ENCODE measurements at regions of chr1 and their contacts with region 1.

Region 1: DNA sequence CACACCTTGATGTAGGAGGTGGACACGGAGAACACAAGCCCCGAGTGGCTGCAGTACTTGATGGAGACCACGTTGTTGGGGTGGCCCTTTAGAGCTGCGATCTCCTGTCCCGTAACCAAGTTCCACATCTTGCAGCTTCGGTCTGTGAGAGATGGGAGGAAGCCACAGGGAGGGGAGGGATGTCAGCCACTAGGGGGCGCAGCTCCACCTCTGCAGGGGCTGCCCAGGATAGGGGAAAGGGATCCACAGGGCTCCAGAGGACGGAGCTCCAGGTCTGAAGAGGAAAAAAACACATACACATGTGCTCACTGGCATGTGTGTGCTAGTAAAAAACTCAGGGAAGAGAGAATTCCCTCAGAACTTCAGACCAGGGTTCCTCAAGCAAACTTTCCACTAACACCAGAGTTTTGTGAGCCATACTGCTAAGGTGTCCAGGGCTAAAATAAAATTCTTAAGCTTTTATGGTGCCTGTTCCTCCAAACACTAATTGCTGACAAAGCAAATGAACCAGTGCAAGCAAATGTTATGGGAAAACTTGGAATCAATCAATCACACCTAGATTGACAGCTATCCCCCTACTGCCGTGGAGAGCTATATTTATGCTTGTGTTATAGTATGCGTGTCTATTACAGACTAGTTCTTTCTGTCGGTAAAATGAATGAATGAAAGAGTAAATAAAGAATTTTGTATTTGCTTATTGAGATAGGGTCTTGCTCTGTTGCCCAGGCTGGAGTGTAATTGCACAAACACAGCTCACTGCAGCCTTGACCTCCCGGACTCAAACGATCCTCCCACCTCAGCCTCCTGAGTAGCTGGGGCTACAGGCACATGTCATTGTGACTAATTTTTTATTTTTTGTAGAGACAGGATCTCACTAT is 43.7 kb downstream of the KIF21B start:
- DNase-seq: peak; percentile 78
- H3K4me3 Mint-ChIP-seq: no peak overlapping the region
- H3K27ac Mint-ChIP-seq: no peak overlapping the region
- H3K4me1 Mint-ChIP-seq: no peaks in the 10 kb centered on the region
- H3K27me3 Mint-ChIP-seq: no peaks in the 10 kb centered on the region

Region 2: GRCh38 chr1:200992382-200993048 is 12.7 kb after region 1 on chr1:
- CTCF ChIA-PET with region 1: interaction called, 19 read pairs
- DNase-seq: no peak
- H3K4me3 Mint-ChIP-seq: no peak overlapping the region
- H3K27ac Mint-ChIP-seq: no peak overlapping the region
- H3K4me1 Mint-ChIP-seq: no peaks in the 10 kb centered on the region
- H3K27me3 Mint-ChIP-seq: no peaks in the 10 kb centered on the region

Region 3: GRCh38 chr1:201023517-201023902 is 43.7 kb after region 1 on chr1 and contains the start of gene KIF21B:
- CTCF ChIA-PET with region 1: interaction called, 32 read pairs
- DNase-seq: peak; percentile 94
- H3K4me3 Mint-ChIP-seq: peak within 1 kb of the TSS; percentile 89
- H3K27ac Mint-ChIP-seq: peak within 1 kb of the TSS; percentile 100
- H3K4me1 Mint-ChIP-seq: peaks cover 75% of the 10 kb centered on the region
- H3K27me3 Mint-ChIP-seq: peaks cover 3% of the 10 kb centered on the region

Region 4: GRCh38 chr1:201053158-201053860 is 73.5 kb after region 1 on chr1:
- CTCF ChIA-PET with region 1: interaction called, 22 read pairs
- DNase-seq: no peak
- H3K4me3 Mint-ChIP-seq: no peak overlapping the region
- H3K27ac Mint-ChIP-seq: no peak overlapping the region
- H3K4me1 Mint-ChIP-seq: peaks cover 11% of the 10 kb centered on the region
- H3K27me3 Mint-ChIP-seq: peaks cover 44% of the 10 kb centered on the region

Region 5: GRCh38 chr1:201119206-201120197 is 139.7 kb after region 1 on chr1:
- CTCF ChIA-PET with region 1: interaction called, 17 read pairs
- DNase-seq: peak; percentile 69
- H3K4me3 Mint-ChIP-seq: no peak overlapping the region
- H3K27ac Mint-ChIP-seq: no peak overlapping the region
- H3K4me1 Mint-ChIP-seq: peaks cover 6% of the 10 kb centered on the region
- H3K27me3 Mint-ChIP-seq: peaks cover 83% of the 10 kb centered on the region